ENCODE measurements at regions of chr11 and their contacts with region 1.

Region 1: GRCh38 chr11:20127671-20128527 is 32.4 kb downstream of the DBX1 start:
- DNase-seq: no peak
- H3K4me3 ChIP-seq: no peak overlapping the region
- H3K27me3 ChIP-seq: no peaks in the 10 kb centered on the region
- CTCF ChIP-seq: peak; percentile 85

Region 2: GRCh38 chr11:19759389-19759788 is 368.5 kb before region 1 on chr11:
- CTCF ChIA-PET with region 1: no interaction called
- POLR2A ChIA-PET with region 1: no interaction called
- DNase-seq: no peak
- H3K4me3 ChIP-seq: no peak overlapping the region
- H3K27me3 ChIP-seq: no peaks in the 10 kb centered on the region
- CTCF ChIP-seq: no peak

Region 3: DNA sequence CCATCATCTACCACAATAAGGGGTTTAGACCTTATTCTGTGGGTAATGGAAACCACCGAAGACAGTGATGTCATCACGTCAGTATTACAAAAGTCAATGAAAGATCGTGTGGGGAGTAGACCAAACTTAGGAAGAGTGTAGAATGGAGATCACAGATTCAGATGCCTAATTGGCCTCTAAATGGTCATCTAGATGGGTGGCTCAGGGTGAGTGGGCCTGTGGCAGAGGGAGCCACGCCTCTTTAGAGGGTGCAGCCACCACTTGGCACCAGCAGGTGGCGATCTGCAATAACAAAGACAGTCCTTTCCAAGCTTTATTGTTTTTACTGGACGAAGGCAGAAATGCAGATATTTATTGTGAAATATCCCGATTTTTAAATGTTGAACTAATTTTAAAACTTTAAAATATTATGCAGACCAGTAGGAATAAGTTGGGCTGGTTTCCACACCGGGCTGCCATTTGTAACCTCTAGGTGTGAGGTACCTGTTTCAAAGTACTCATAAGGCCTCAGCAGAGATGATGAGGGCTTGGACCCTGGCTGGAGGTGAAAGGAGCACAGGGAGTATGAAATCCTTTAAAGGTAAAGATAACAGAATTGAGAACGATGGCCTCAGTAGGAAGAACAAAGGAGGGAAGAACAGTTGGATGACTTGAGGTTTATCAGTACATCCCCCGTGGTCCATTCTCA is 189.6 kb before region 1 on chr11:
- CTCF ChIA-PET with region 1: interaction called, 20 read pairs
- POLR2A ChIA-PET with region 1: no interaction called
- DNase-seq: no peak
- H3K4me3 ChIP-seq: no peak overlapping the region
- H3K27me3 ChIP-seq: no peaks in the 10 kb centered on the region
- CTCF ChIP-seq: peak; percentile 77

Region 4: DNA sequence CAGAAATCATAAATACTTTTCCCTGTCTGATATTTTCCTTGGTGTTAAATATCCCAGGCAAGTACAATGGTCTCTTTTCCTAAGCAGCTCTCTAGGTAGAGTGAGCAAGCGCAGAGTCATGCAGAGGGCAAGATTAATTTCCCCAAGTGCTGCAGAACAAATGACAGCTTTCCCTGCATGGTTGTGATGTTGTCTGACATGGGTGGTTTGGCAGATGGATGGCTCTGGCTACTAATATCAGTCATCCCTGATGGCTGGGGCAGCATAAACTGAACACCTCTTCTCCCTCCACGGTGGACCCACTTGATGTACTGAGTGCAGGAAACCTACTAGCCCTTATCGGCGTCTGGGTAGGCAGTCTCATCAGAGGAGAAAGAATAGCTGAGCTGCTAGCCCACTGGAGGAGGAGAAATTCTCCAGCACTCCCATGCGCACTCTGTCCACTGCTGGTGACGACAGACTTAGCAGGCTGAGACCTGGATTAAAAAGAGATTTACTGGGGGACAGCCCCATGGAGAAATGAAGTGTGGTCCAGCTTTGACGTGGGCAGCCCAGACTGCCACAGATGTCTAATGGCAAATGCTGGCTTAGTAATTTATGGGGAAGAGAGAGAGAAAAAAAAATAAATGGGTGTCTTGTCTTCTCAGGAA is 170.5 kb before region 1 on chr11:
- CTCF ChIA-PET with region 1: interaction called, 91 read pairs
- POLR2A ChIA-PET with region 1: no interaction called
- DNase-seq: no peak
- H3K4me3 ChIP-seq: no peak overlapping the region
- H3K27me3 ChIP-seq: no peaks in the 10 kb centered on the region
- CTCF ChIP-seq: no peak

Region 5: DNA sequence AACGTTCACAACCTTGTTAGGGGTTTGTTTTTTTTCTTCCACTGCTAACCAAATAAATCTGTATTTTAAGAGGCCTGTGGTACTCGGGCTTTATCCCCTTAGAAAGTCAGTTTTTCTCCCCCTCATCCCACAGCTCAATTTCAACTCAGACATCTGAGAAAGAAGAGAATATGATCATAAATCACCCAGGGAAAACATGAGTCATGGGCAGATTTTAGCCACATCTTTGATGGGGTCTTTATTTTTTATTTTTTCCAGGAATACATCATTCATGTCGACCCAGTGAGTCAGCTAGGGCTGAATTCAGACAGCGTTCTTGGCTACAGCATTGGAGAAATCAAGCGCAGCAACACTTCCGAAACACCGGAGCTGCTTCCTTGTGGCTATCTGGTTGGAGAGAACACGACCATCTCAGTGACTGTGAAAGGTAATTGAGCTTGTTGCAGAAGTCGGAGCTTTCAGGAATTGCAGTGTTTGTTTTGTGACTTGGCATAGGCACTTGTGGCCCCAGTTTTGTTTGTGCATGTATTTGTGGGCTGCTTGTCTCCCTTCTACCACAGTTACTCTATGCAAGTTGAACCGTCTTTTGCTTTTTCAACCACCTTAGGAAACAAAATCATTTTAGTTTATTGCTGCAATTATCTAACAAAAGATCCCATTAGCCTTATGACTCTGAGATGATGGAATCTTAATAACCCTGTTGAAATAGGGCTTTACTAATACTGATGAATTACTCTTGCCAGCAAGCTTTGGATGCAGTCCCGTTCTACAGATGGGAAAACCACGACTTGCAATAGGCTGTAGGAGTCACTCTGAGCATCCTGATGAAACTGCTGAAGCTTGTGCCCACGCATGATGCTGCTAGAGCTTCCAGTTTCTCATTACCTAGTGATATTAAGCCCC is 30.3 kb before region 1 on chr11:
- CTCF ChIA-PET with region 1: interaction called, 14 read pairs
- POLR2A ChIA-PET with region 1: no interaction called
- DNase-seq: peak; percentile 93
- H3K4me3 ChIP-seq: no peak overlapping the region
- H3K27me3 ChIP-seq: no peaks in the 10 kb centered on the region
- CTCF ChIP-seq: no peak

Region 6: DNA sequence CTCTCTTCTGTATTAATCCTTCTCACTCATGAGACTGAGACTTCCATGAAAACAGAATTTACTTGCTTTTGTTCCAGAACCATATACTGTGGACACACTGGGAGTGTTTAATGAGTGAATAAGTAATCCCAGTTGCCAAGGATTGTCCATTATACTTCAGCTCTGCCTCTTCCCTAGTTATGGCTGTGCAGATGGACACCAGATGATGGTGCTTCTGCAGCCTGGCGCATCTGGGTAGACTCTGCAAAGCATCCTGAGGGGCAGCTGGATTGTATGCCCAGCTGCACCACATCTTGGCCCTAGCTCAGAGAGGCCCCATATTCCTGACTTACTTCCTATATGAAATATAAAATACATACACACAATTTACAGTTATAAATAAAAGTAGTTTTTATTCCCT is 11.1 kb before region 1 on chr11:
- CTCF ChIA-PET with region 1: interaction called, 47 read pairs
- POLR2A ChIA-PET with region 1: no interaction called
- DNase-seq: no peak
- H3K4me3 ChIP-seq: no peak overlapping the region
- H3K27me3 ChIP-seq: no peaks in the 10 kb centered on the region
- CTCF ChIP-seq: no peak

Measured in BJ (cell line).